Uterus (tissue), 4 donors: ENCODE measurements at regions of chr21 and their contacts with region 1.

Region 1: GRCh38 chr21:45443595-45444181 is 38.7 kb downstream of the COL18A1 start:
- DNase-seq: no peak
- H3K4me3 ChIP-seq: no peak overlapping the region
- H3K27ac ChIP-seq: no peak overlapping the region
- H3K4me1 ChIP-seq: peaks cover 4 to 5% of the 10 kb centered on the region in 2 donors
- H3K27me3 ChIP-seq: no peaks in the 10 kb centered on the region
- CTCF ChIP-seq: no peak
- POLR2A ChIP-seq: no peak

Region 2: GRCh38 chr21:45292399-45293219 is 151.1 kb before region 1 on chr21:
- intact Hi-C with region 1: loop called (anchors 2 kb)
- DNase-seq: peak; percentile 86 to 92
- H3K4me3 ChIP-seq: no peak overlapping the region
- H3K27ac ChIP-seq: peak overlapping the region; percentile 86 to 89
- H3K4me1 ChIP-seq: peaks cover 12 to 28% of the 10 kb centered on the region in 2 donors
- H3K27me3 ChIP-seq: no peaks in the 10 kb centered on the region
- CTCF ChIP-seq: peak; percentile 99 to 100 (median 100)
- POLR2A ChIP-seq: no peak

Region 3: DNA sequence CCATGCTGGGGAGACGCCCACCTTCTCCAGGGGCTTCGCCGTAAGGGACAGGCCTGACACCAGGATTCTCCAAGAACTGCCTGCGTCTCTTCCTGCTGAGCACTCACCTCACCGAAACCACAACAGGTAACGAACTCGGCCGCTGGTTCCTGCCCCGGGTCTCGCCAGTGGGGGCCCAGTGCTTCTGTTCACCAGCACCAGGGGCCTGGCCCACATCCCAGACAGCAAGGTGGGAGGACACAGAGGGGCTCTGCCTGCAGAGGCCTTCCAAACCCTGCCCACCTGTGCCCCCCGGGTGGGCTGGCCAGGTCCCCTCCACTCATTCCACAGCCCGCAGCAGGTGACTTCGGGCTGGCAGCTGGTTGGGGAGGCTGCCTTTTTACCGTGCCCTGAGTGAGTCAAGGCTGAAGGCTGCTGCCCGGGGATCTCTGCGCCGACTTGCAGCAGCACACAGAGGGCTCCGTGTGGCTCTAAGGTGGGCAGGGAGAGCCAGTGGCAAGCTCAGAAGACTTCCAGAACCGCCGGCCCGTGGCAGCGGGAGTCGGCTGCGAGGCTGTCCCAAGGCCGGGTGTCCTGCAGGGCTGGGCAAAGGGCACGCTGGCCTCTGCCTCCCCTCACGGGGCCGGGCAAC is 53.5 kb before region 1 on chr21:
- intact Hi-C with region 1: loop called (anchors 2 kb)
- DNase-seq: peak; percentile 13 to 17
- H3K4me3 ChIP-seq: no peak overlapping the region
- H3K27ac ChIP-seq: no peak overlapping the region
- H3K4me1 ChIP-seq: peaks cover 5 to 13% of the 10 kb centered on the region in 2 donors
- H3K27me3 ChIP-seq: no peaks in the 10 kb centered on the region
- CTCF ChIP-seq: no peak
- POLR2A ChIP-seq: no peak